Activated B cell treated with CpG ODN at 0.5 μM for 24 hours (primary cell): ENCODE measurements at regions of chr4 and their contacts with region 1.

Region 1: DNA sequence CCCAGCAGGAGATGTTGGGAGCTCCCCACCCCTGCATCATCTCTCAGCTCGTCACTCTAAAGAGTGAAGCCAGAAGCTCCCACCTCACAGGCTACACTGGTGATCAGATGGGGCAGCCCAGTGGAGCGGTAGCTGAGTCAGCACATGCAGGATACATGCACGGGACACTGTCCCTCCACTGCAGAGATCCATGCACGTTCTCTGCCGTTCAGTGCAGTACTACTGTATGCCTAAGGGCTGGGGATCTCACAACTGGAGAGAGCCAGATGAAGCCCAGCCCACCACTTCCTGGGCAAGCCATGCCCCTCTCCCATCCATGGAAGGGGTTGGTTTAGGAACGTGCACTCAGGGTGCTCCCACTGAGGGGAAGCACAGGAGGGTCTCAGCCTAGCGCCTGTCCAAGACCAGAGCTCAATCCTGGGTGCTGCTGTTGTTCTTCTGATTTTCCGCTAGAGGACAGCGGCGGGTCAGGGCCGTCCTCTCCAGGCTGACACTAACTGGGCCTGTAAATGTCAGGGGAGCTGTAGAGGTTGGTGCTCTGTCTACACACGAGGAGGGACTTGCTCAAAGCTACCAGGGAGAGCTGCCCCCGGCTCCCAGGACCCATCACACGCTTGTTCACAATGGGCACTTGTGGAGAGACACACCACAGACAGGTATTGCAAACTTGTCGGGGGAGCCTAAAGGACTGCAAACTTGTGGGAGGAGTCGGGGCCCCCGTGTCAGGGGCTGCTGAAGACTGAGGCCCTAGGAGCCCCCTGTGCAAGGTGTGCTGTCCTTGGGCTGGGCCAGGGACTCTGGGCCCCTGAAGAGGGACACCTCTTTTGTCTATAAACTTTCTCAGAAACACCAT is 18.2 kb upstream of the ABLIM2 start:
- DNase-seq: peak; percentile 33
- ATAC-seq: peak; percentile 80
- H3K4me3 Mint-ChIP-seq: no peak overlapping the region
- H3K27ac Mint-ChIP-seq: no peak overlapping the region
- H3K4me1 Mint-ChIP-seq: peaks cover 18% of the 10 kb centered on the region
- H3K27me3 Mint-ChIP-seq: no peaks in the 10 kb centered on the region
- CTCF ChIP-seq: peak; percentile 43

Region 2: GRCh38 chr4:8117278-8117682 is 59.5 kb before region 1 on chr4:
- CTCF ChIA-PET with region 1: no interaction called
- POLR2A ChIA-PET with region 1: no interaction called
- intact Hi-C with region 1: loop called (anchors 2 kb)
- DNase-seq: no peak
- ATAC-seq: peak; percentile 77
- H3K4me3 Mint-ChIP-seq: no peak overlapping the region
- H3K27ac Mint-ChIP-seq: no peak overlapping the region
- H3K4me1 Mint-ChIP-seq: peaks cover 5% of the 10 kb centered on the region
- H3K27me3 Mint-ChIP-seq: peaks cover 2% of the 10 kb centered on the region
- CTCF ChIP-seq: no peak

Region 3: DNA sequence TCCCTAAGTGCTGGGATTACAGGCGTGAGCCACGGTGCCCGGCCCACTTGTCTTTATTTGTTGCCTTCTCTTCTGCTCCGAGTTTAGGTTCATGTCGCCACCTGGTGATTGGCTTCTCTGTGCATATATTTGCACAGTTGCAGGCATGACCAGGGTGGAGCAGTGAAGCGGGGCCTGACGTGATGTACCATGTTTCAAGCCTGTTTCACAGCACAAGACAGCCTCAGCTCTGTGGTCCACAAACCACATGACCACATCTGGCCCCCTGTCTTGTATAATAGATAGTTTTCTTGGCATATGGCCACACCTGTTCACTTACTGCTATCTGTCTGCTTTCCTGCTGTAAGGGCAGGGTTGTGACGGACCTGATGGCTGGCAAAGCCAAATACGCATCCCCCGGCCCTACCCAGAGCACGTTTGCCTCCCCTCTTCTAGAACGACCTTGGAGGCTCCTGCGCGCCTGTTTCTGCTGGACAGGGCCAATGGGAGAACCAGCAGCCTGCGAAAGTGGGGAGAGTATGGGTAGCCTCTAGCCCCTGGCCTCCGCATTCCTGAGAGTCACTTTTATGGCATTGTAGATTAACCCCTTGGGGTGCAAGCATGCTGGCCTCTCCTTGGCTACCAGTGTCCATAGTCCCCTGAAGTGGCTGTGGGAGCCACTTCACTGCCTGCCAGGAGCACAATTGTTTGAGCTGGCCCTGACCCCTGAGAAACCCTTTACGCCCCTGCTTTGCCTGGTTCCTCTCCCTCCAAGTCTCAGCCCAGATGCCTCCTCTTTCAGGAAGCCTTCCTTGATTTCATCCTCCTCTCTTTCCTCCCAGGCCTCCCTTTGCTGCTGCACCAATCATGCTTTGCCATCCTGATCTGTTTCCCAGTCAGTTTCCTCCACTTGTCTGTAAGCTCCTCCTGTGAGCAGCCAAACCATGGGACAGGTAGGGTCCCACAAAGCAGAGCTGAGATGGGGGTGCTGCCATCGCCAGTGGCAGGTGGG is 16.3 kb after region 1 on chr4:
- CTCF ChIA-PET with region 1: interaction called, 61 read pairs
- POLR2A ChIA-PET with region 1: interaction called, 20 read pairs
- intact Hi-C with region 1: loop called (anchors 1 kb)
- DNase-seq: peak; percentile 52
- ATAC-seq: peak; percentile 99
- H3K4me3 Mint-ChIP-seq: peak overlapping the region; percentile 20
- H3K27ac Mint-ChIP-seq: peak overlapping the region; percentile 69
- H3K4me1 Mint-ChIP-seq: peaks cover 36% of the 10 kb centered on the region
- H3K27me3 Mint-ChIP-seq: peaks cover 2% of the 10 kb centered on the region
- CTCF ChIP-seq: no peak

Region 4: DNA sequence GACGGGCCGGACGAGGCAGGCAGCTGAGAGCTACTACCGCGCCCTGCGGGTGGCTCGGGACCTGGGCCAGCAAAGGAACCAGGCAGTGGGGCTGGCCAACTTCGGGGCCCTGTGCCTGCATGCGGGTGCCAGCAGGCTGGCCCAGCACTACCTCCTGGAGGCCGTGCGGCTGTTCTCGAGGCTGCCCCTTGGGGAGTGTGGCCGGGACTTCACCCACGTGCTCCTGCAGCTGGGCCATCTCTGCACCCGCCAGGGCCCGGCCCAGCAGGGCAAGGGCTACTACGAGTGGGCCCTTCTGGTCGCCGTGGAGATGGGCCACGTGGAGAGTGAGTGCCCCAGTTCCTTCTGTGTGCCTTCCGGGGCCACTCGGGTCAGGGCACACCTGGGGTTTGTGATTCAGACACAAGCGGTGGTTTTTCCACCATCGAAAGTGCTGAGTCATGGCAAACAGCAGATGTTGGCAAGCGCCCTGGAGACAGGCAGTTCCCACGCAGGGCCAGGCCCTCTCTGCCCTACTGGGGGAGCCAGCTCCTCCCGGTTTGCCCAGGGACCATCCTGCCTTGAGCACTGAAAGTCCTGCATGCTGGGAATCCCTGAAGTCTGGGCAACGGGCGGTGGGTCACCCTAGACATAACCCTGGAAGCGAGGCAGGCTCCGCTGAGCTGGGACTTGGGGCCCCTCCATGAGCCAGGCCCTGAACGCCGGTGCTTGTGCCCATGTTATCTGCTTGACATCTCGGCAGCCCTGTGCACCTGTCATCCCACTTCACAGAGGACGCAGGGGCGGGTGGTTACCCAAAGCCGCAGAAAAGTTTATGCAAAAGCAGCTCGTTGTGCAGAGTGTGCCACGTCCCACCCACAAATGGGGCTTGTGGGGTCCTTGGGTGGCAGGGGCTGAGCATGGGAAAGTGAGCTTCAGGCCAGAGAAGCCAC is 51.8 kb after region 1 on chr4:
- CTCF ChIA-PET with region 1: interaction called, 10 read pairs
- POLR2A ChIA-PET with region 1: interaction called, 9 read pairs
- intact Hi-C with region 1: loop called (anchors 2 kb)
- DNase-seq: peak; percentile 70
- ATAC-seq: peak; percentile 74
- H3K4me3 Mint-ChIP-seq: peak overlapping the region; percentile 67
- H3K27ac Mint-ChIP-seq: peak overlapping the region; percentile 89
- H3K4me1 Mint-ChIP-seq: peaks cover 45% of the 10 kb centered on the region
- H3K27me3 Mint-ChIP-seq: no peaks in the 10 kb centered on the region
- CTCF ChIP-seq: no peak

Region 5: DNA sequence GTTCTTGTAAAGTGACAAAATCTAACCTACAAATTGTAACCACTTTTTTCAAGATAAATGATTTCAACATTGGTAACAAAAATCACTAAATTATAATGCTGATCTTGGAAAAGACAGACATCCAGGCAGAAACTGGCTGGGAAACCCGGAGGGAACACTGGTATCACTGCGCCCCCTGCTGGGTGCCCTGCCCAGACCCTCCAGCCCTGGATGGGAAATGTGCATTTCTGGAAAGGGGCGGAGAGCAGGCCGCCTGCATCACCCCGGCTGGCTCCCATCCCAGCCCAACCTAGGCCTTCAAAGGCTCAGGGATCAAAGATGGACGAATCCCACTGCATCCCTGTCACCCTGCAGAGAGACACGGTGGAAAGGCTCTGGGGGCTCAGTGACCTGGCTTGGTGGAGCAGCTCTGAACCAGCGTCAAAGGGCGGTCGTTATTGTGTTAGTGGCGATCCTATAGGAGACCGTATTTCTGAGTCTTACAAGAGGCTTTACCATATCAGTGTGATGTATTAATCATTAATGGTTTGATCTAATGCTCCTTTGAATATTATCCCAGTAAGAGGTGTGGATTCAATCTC is 226.5 kb after region 1 on chr4:
- CTCF ChIA-PET with region 1: interaction called, 14 read pairs
- POLR2A ChIA-PET with region 1: no interaction called
- intact Hi-C with region 1: loop called (anchors 1 kb)
- DNase-seq: peak; percentile 50
- ATAC-seq: peak; percentile 50
- H3K4me3 Mint-ChIP-seq: no peak overlapping the region
- H3K27ac Mint-ChIP-seq: no peak overlapping the region
- H3K4me1 Mint-ChIP-seq: peaks cover 5% of the 10 kb centered on the region
- H3K27me3 Mint-ChIP-seq: no peaks in the 10 kb centered on the region
- CTCF ChIP-seq: peak; percentile 39